ENCODE measurements at regions of chr12 and their contacts with region 1.

Region 1: DNA sequence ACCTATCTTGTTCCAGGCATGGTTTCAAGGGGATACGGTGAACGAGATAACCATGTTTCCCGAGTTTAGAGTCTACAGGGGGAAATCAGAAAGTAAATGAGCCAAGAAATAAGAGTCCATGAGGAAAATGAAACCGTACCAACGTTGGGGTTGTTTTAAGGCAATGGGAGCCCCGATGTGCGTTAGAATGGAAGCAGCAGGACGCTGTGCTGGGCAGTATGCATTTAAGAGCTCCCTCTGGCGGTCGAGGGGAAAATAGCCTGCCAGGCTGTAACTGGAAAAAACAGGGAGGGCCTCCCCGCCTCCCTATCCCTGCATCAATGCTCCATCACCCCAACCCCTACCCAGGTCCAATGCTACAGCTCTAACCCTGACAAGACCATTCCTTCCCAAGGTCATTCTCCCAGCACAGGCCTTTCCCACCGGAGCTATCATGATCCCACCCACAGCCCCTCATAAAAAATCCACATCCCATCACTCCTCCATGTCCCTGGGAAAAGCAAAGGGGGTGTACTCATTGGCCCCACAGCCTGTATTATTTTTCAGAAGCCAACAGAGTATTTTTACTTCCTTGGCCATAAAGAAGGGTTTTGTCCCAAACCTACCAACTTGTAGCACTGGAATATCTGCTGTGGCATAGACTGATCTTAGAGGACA is 226.3 kb upstream of the NOS1 start:
- DNase-seq: peak; percentile 70
- ATAC-seq: no peak
- H3K4me3 Mint-ChIP-seq: no peak overlapping the region
- H3K27ac Mint-ChIP-seq: no peak overlapping the region
- H3K4me1 Mint-ChIP-seq: no peaks in the 10 kb centered on the region
- H3K27me3 Mint-ChIP-seq: peaks cover 2% of the 10 kb centered on the region

Region 2: GRCh38 chr12:116642683-116643082 is 945.1 kb before region 1 on chr12:
- CTCF ChIA-PET with region 1: no interaction called
- POLR2A ChIA-PET with region 1: no interaction called
- intact Hi-C with region 1: no loop called
- DNase-seq: no peak
- ATAC-seq: no peak
- H3K4me3 Mint-ChIP-seq: no peak overlapping the region
- H3K27ac Mint-ChIP-seq: no peak overlapping the region
- H3K4me1 Mint-ChIP-seq: peaks cover 4% of the 10 kb centered on the region
- H3K27me3 Mint-ChIP-seq: no peaks in the 10 kb centered on the region

Region 3: GRCh38 chr12:117212563-117213190 is 375.1 kb before region 1 on chr12:
- CTCF ChIA-PET with region 1: no interaction called
- POLR2A ChIA-PET with region 1: no interaction called
- intact Hi-C with region 1: loop called in 1 of 2 experiments (anchors 1 kb)
- DNase-seq: peak; percentile 80
- ATAC-seq: peak; percentile 64
- H3K4me3 Mint-ChIP-seq: no peak overlapping the region
- H3K27ac Mint-ChIP-seq: no peak overlapping the region
- H3K4me1 Mint-ChIP-seq: no peaks in the 10 kb centered on the region
- H3K27me3 Mint-ChIP-seq: peaks cover 10% of the 10 kb centered on the region

Region 4: DNA sequence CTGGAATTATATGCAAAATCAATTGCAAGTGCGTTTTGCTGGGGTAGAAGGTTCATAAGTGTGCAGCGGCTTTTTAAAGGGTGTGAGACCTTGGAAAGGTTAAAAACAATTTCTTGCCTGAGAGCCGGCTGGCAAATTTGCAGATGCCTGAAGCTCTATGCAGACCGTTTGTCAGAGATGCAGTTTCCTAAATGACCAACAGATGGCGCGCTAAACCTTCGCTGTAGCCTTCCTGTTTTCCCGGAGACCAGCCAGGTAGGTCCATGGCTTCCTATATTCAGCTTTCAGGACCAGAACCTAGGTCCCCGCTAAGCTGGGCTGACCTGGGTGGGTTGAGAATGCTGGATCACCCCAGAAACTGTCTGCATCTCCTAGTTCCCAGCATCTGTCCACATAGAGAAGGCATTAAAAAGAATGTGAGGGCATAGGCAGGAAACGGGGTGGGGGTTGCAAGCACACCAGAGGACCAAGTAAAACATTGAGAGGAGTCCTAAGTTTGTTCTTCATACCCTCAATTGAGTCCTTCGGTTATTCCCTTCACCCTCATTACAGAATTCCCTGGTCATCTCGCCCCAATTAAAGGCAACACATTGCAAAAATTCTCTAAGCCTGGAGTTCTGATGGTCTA is 220.6 kb before region 1 on chr12:
- CTCF ChIA-PET with region 1: interaction called, 16 read pairs
- POLR2A ChIA-PET with region 1: no interaction called
- intact Hi-C with region 1: loop called (anchors 1 to 2 kb)
- DNase-seq: peak; percentile 77
- ATAC-seq: no peak
- H3K4me3 Mint-ChIP-seq: no peak overlapping the region
- H3K27ac Mint-ChIP-seq: no peak overlapping the region
- H3K4me1 Mint-ChIP-seq: no peaks in the 10 kb centered on the region
- H3K27me3 Mint-ChIP-seq: peaks cover 37% of the 10 kb centered on the region